ENCODE measurements at regions of chr9 and their contacts with region 1.

Region 1: DNA sequence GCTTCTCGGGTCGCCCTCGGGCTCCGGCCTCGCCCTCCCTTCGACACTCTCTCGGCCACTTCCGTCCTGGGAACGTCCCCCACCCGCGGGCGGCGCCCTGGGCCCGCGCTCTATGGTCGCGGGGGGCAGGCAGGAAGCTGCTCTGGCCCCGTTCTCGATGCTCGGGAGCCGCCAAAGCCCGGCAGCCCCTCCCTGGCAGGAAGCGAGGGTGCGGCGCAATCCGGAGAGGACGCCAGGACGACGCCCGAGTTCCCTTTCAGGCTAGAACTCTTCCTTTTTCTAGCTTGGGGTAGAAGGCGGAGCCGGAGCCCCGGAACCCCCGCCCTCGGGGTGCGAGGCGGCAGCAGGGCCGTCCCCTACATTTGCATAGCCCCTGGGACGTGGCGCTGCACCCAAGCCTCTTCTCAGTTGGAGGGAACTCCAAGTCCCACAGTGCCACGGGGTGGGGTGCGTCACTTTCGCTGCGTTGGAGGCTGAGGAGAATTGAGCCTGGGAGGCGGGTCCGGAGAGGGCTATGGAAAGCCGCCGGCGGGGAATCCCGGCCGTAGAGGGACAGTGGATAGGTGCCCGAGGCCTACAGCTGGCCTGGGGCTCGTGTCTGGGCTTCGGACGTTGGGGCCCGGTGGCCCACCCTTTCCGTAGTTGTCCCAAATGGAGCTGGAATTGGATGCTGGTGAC is at the starts of genes CREB3 and TLN1:
- DNase-seq: peak; percentile 99
- H3K4me3 ChIP-seq: peak within 1 kb of the TSS; percentile 46 to 92 (median 79)
- H3K27ac ChIP-seq: peak within 1 kb of the TSS; percentile 79
- H3K4me1 ChIP-seq: peaks cover 55% of the 10 kb centered on the region
- H3K27me3 ChIP-seq: no peaks in the 10 kb centered on the region
- CTCF ChIP-seq: peak in 1 of 2 donors; percentile 14
- POLR2A ChIP-seq: peak; percentile 48
- total RNA-seq, gene CREB3: 36.4 and 39.8 TPM in 2 replicates
- total RNA-seq, gene TLN1: 424 and 450 TPM in 2 replicates

Region 2: DNA sequence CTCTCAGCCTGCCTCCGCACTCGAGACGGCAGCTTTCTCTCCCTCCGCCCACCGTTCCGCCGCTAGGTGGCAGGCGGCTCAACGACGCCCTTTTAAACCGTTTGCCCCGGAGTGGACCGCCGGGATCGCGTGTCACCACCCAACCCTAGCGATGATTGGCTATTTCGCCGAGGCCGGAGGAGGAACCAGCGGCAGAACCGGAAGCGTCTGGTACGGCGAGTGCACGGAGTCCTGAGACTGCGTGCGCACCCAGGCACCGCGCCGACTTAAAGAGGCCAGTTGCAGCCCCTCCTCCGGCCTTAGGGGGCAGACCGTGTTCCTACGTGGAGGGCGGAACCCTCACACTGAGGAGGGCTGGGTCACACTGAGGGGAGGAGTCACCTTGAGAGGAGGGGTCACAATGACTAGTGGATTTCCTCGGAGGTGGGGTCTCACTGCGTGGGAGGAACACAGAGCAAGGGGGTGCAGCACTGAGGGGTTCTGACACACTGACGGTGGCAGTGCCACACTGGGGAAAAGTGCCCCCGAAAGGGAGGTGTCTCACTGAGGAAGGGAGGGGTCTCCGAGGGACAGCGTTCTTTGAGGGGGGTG is 128.2 kb before region 1 on chr9:
- CTCF ChIA-PET with region 1: interaction called, 7 read pairs
- POLR2A ChIA-PET with region 1: no interaction called
- dilution Hi-C with region 1: no loop called
- intact Hi-C with region 1: loop called (anchors 1 kb)
- DNase-seq: peak; percentile 100
- H3K4me3 ChIP-seq: peak overlapping the region; percentile 0 to 41 (median 27)
- H3K27ac ChIP-seq: no peak overlapping the region
- H3K4me1 ChIP-seq: peaks cover 16% of the 10 kb centered on the region
- H3K27me3 ChIP-seq: peaks cover 0 to 2% of the 10 kb centered on the region in 2 experiments
- CTCF ChIP-seq: peak; percentile 88 to 99
- POLR2A ChIP-seq: no peak

Region 3: DNA sequence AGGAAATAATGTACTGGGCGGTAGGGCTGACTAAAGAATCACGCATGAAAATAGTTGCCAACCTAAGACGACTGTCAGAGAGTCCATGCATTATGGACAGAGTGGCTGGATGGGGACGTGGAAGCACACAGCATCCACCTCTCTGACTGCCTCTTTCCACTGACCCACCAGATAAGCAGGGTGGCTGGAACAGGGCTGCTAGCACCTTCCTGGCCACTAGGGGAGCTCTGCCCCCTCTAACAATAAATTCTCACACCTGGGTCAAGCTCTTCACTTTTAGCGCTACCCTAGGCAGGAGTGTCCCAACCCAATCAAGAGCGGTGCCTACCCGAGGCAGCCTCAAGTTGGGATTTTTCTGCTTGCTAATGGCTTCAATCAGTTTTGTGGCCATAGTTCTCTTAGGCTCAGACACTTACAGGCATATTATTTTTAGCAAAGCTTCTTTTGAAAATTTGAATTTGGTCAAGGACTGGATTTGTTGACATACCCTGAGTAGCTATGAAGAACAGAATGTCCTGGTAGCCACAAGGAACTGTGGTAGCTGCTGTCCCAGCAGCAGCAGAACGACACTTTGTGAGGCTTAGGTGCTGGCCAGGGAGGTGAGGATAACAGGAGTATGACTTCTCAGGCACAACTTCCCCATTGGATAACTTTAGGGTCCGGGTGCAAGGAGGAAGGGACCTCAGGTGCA is 35.6 kb before region 1 on chr9:
- CTCF ChIA-PET with region 1: interaction called, 52 read pairs
- POLR2A ChIA-PET with region 1: interaction called, 6 read pairs
- dilution Hi-C with region 1: no loop called
- intact Hi-C with region 1: loop called (anchors 2 kb)
- DNase-seq: peak; percentile 59
- H3K4me3 ChIP-seq: no peak overlapping the region
- H3K27ac ChIP-seq: no peak overlapping the region
- H3K4me1 ChIP-seq: no peaks in the 10 kb centered on the region
- H3K27me3 ChIP-seq: no peaks in the 10 kb centered on the region
- CTCF ChIP-seq: peak; percentile 86 to 94
- POLR2A ChIP-seq: peak; percentile 30

Region 4: GRCh38 chr9:35763181-35763580 is 30.9 kb after region 1 on chr9:
- CTCF ChIA-PET with region 1: interaction called, 10 read pairs
- POLR2A ChIA-PET with region 1: no interaction called
- dilution Hi-C with region 1: no loop called
- intact Hi-C with region 1: loop called (anchors 1 kb)
- DNase-seq: no peak
- H3K4me3 ChIP-seq: no peak overlapping the region
- H3K27ac ChIP-seq: no peak overlapping the region
- H3K4me1 ChIP-seq: peaks cover 41% of the 10 kb centered on the region
- H3K27me3 ChIP-seq: no peaks in the 10 kb centered on the region
- CTCF ChIP-seq: no peak
- POLR2A ChIP-seq: no peak

Region 5: DNA sequence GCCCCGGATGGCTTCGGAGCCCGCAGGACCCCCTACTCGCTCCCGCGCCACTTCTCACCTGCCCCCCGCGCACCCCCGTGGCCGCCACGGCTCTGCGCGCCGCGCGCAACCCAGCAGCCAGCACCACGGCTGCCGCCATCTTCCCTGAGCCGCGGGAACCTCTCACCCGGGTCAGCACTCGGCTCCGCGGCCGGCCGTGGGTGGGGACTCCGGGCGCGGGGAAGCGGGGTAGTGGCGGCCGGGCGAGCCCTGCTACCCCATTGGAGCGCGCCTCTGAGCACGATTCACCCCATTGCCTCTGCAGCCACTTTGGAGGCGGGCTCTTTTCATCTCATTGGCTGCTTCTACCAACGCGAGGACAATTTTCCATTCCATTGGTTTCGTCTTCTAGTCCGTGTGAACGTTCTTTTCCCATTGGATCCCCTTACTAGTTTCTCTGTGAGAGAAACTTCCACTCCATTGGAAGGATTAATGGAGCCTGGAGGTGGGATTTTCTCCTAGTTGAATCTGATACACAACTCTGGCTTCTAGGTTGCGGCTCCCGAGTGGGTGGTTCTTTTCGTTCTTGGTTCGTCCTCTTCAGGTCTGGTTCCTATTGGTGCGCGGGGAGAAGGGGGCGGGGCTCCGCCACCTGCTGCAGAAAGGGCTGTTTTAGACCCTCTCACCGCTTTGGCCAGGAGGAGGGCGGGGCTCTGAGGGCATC is 82.7 kb after region 1 on chr9 and contains the start of gene HINT2:
- CTCF ChIA-PET with region 1: interaction called, 32 read pairs
- POLR2A ChIA-PET with region 1: interaction called, 7 read pairs
- dilution Hi-C with region 1: no loop called
- intact Hi-C with region 1: loop called (anchors 1 kb)
- DNase-seq: peak; percentile 99
- H3K4me3 ChIP-seq: peak within 1 kb of the TSS; percentile 83 to 89 (median 85)
- H3K27ac ChIP-seq: peak within 1 kb of the TSS; percentile 44
- H3K4me1 ChIP-seq: peaks cover 21% of the 10 kb centered on the region
- H3K27me3 ChIP-seq: no peaks in the 10 kb centered on the region
- CTCF ChIP-seq: no peak
- POLR2A ChIP-seq: peak; percentile 93
- total RNA-seq, gene HINT2: 27.2 and 37.4 TPM in 2 replicates

Region 6: DNA sequence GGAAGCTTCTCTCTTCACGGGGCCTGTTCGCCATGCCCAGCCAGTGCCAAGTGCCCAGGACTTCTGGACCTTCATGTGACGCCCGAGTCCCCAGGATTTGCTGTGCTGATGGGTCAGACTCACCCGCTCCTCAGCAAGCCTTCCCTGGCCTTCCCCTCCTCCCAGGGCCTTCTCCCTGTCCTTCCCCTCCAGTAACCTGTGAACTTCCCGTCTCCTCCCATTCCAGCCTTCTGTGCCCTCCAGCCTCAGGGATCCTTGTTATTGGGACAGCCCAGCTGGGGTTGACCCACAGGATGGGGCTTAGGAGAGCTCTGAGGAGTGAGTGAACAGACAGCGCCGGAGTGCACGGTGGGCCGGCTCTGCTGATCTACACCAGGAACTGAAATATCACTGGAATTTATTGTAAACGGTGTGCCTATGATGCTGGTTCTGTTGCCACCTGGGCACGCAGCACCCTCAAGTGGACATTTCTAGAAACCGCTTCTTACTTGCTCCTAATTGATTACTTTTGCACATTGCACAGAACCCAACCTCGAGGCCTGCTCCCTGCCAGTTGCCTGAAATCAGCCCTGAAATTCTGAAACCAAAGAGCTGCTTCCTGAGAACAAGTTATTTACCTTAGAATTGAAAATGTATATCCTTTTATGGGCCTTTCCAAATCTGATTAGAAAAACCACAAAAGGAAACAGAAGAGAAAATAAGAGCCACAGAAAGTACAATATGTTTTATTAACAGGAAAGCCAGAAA is 178.5 kb after region 1 on chr9:
- CTCF ChIA-PET with region 1: interaction called, 6 read pairs
- POLR2A ChIA-PET with region 1: no interaction called
- dilution Hi-C with region 1: no loop called
- intact Hi-C with region 1: loop called (anchors 2 kb)
- DNase-seq: peak; percentile 86
- H3K4me3 ChIP-seq: peak overlapping the region in 2 of 3 experiments; percentile 4 to 53
- H3K27ac ChIP-seq: peak overlapping the region; percentile 94
- H3K4me1 ChIP-seq: peaks cover 68% of the 10 kb centered on the region
- H3K27me3 ChIP-seq: no peaks in the 10 kb centered on the region
- CTCF ChIP-seq: peak; percentile 60 to 65
- POLR2A ChIP-seq: peak; percentile 61

Region 7: GRCh38 chr9:36008774-36009300 is 276.6 kb after region 1 on chr9:
- CTCF ChIA-PET with region 1: no interaction called
- POLR2A ChIA-PET with region 1: no interaction called
- dilution Hi-C with region 1: no loop called
- intact Hi-C with region 1: no loop called
- DNase-seq: peak; percentile 54
- H3K4me3 ChIP-seq: no peak overlapping the region
- H3K27ac ChIP-seq: no peak overlapping the region
- H3K4me1 ChIP-seq: no peaks in the 10 kb centered on the region
- H3K27me3 ChIP-seq: peaks cover 2 to 16% of the 10 kb centered on the region in 2 experiments
- CTCF ChIP-seq: peak; percentile 80 to 100
- POLR2A ChIP-seq: no peak